Activated CD4-positive, alpha-beta T cell treated with anti-CD3 and anti-CD28 coated beads for 36 hours (primary cell): ENCODE measurements at regions of chr11 and their contacts with region 1.

Region 1: GRCh38 chr11:126440792-126441514 is 85.5 kb downstream of the ST3GAL4 start:
- DNase-seq: peak; percentile 84
- ATAC-seq: peak; percentile 90
- H3K4me3 Mint-ChIP-seq: no peak overlapping the region
- H3K27ac Mint-ChIP-seq: no peak overlapping the region
- H3K4me1 Mint-ChIP-seq: peaks cover 3% of the 10 kb centered on the region
- H3K27me3 Mint-ChIP-seq: peaks cover 7% of the 10 kb centered on the region

Region 2: GRCh38 chr11:126716456-126717083 is 275.6 kb after region 1 on chr11:
- CTCF ChIA-PET with region 1: no interaction called
- POLR2A ChIA-PET with region 1: no interaction called
- intact Hi-C with region 1: loop called (anchors 5 to 10 kb)
- DNase-seq: peak; percentile 63
- ATAC-seq: peak; percentile 36
- H3K4me3 Mint-ChIP-seq: no peak overlapping the region
- H3K27ac Mint-ChIP-seq: no peak overlapping the region
- H3K4me1 Mint-ChIP-seq: no peaks in the 10 kb centered on the region
- H3K27me3 Mint-ChIP-seq: peaks cover 19% of the 10 kb centered on the region